ENCODE measurements at regions of chr2 and their contacts with region 1.

Region 1: DNA sequence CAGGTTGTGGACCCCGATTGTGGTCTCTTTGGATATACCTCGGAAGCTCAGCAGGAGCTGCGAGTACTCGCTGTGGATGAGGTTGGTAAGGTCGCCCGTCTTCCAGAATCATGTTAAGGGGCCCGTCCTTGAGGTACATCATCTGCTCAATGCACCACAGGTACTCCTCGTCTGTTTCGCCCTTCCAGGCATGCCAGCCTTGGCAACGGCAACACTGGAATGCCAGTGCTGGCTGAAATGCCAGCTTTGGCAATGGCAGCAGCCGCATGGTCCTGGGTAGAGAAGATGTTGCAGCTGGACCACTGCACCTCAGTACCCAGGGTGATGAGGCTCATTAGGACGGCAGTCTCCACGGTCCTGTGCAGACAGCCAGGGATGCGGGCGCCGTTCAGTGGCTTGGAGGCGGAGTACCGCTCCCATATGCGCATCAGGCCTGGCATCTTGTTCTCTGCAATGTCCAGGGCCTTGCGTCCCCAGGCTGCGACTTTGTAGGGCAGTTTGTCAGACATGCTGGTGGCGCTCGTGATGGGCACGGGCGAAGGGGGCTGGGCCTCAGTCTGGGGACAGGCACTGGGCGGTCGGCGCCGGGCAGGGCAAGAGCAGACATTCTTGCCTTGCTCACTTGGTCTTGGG is 122.2 kb upstream of the NXPH2 start:
- DNase-seq: no peak
- ATAC-seq: no peak
- H3K4me3 ChIP-seq: no peak overlapping the region
- H3K27ac ChIP-seq: no peak overlapping the region
- H3K4me1 ChIP-seq: no peaks in the 10 kb centered on the region
- H3K27me3 ChIP-seq: no peaks in the 10 kb centered on the region
- CTCF ChIP-seq: no peak
- POLR2A ChIP-seq: no peak
- RAD21 ChIP-seq: no peak

Region 2: GRCh38 chr2:139600166-139600565 is 697.8 kb after region 1 on chr2:
- CTCF ChIA-PET with region 1: no interaction called
- POLR2A ChIA-PET with region 1: no interaction called
- RAD21 ChIA-PET with region 1: no interaction called
- intact Hi-C with region 1: loop called (anchors 10 kb)
- DNase-seq: no peak
- ATAC-seq: no peak
- H3K4me3 ChIP-seq: no peak overlapping the region
- H3K27ac ChIP-seq: no peak overlapping the region
- H3K4me1 ChIP-seq: no peaks in the 10 kb centered on the region
- H3K27me3 ChIP-seq: no peaks in the 10 kb centered on the region
- CTCF ChIP-seq: no peak
- POLR2A ChIP-seq: no peak
- RAD21 ChIP-seq: no peak

Measured in HCT116 (cell line).